ENCODE measurements at regions of chr12 and their contacts with region 1.

Region 1: GRCh38 chr12:32455607-32456071 is 56.3 kb downstream of the FGD4 start:
- DNase-seq: no peak
- H3K4me3 ChIP-seq: peak overlapping the region; percentile 59
- H3K27ac ChIP-seq: peak overlapping the region; percentile 79
- H3K4me1 ChIP-seq: peaks cover 71% of the 10 kb centered on the region
- H3K27me3 ChIP-seq: no peaks in the 10 kb centered on the region
- CTCF ChIP-seq: peak; percentile 72

Region 2: GRCh38 chr12:32533971-32534590 is 78.4 kb after region 1 on chr12:
- intact Hi-C with region 1: loop called (anchors 10 kb)
- DNase-seq: peak; percentile 31
- H3K4me3 ChIP-seq: peak overlapping the region; percentile 66
- H3K27ac ChIP-seq: peak overlapping the region; percentile 84
- H3K4me1 ChIP-seq: peaks cover 67% of the 10 kb centered on the region
- H3K27me3 ChIP-seq: no peaks in the 10 kb centered on the region
- CTCF ChIP-seq: no peak

Region 3: DNA sequence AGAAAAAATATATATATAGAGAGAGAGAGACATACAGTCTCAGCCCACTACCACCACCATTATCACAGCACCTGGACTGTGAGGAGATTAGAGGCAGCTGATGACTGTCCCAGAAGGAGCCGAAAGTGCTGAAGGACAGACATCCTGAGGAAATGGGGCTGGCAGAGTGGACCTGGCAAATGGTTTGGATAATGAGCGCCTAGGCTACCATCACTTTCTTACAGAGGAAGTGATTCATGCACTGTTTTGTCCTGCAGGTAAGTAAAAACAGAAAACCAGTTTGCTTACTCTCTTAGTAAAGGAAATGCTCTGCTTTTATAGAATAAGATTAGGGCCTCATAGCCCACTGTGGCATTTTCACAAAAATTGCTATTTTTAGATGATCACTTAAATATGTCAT is 194.9 kb after region 1 on chr12:
- intact Hi-C with region 1: loop called (anchors 5 kb)
- DNase-seq: no peak
- H3K4me3 ChIP-seq: no peak overlapping the region
- H3K27ac ChIP-seq: no peak overlapping the region
- H3K4me1 ChIP-seq: no peaks in the 10 kb centered on the region
- H3K27me3 ChIP-seq: no peaks in the 10 kb centered on the region
- CTCF ChIP-seq: no peak

Region 4: DNA sequence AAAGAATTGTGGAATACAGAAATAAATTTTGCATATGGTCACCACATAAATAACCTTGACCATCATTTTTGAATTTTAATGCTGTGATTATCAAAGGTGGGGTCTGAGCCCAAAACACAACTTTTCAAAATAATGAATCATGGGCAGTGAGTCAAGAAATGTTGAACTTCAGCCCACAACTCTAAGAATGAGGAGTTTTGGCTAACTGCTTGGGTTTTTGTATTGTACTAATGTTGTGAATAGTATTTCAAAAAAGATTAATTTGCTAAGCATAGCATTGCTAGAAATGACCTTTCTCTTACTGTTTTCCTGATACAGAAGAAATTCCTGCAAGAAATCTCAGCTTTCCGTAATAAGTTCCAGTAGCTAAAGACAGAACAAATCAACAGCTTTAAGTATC is 324.4 kb after region 1 on chr12:
- intact Hi-C with region 1: no loop called
- DNase-seq: no peak
- H3K4me3 ChIP-seq: no peak overlapping the region
- H3K27ac ChIP-seq: no peak overlapping the region
- H3K4me1 ChIP-seq: no peaks in the 10 kb centered on the region
- H3K27me3 ChIP-seq: no peaks in the 10 kb centered on the region
- CTCF ChIP-seq: no peak

Region 5: DNA sequence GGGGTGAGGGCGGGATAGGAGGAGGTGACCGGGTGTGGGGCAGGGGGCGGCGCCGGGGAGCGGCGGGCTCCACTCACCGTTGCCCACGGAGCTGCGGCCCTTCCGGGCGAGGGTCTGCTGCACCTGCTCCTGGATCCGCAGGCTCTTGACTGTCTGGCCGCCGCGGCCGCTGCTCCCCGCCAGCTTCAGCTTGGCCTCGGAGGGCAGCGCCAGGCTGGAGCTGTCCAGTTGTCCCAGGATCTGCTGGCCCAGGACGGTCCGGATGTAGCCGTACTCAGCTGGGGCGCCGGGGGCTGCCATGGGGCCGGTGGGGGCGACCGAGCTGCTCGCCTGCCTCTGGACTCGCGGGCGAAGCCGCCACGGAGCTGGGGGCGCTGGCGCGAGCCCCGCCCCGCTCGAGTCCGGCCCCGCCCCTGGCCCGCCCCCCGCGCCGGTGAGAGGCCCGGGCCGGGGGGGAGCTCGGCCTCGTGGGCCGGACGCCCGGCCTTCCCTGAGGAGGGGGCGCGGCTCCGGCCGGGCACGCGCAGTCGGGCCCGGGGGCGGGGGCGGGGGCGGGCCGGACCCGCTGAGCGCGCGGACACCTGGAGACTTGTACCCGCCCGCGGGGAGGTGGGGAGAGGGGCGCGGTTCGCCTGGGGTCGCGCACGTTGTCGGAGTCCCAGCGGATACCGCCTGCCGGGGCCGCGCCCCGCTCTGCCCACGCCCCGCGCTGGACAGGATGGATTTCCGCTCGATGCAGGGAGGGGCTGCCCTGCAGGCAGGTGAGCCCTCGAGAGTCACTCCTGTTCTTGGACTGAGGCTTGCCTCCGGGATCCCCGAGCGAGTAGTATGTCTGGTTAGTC is 441.0 kb after region 1 on chr12 and contains the start of gene PKP2:
- intact Hi-C with region 1: no loop called
- DNase-seq: peak; percentile 58
- H3K4me3 ChIP-seq: peak within 1 kb of the TSS; percentile 81
- H3K27ac ChIP-seq: peak within 1 kb of the TSS; percentile 91
- H3K4me1 ChIP-seq: peaks cover 17% of the 10 kb centered on the region
- H3K27me3 ChIP-seq: peaks cover 39% of the 10 kb centered on the region
- CTCF ChIP-seq: no peak
- total RNA-seq, gene PKP2: 428 TPM